ENCODE measurements at regions of chr9 and their contacts with region 1.

Region 1: GRCh38 chr9:120348951-120349429 is 231.0 kb downstream of the CDK5RAP2 start:
- DNase-seq: peak; percentile 39
- H3K4me3 ChIP-seq: no peak overlapping the region
- H3K27ac ChIP-seq: no peak overlapping the region
- H3K4me1 ChIP-seq: no peaks in the 10 kb centered on the region
- H3K27me3 ChIP-seq: no peaks in the 10 kb centered on the region
- CTCF ChIP-seq: peak; percentile 48 to 73
- POLR2A ChIP-seq: no peak

Region 2: GRCh38 chr9:118522093-118523028 is 1826.6 kb before region 1 on chr9:
- CTCF ChIA-PET with region 1: no interaction called
- POLR2A ChIA-PET with region 1: no interaction called
- dilution Hi-C with region 1: no loop called
- intact Hi-C with region 1: loop called (anchors 1 kb)
- DNase-seq: peak; percentile 79
- H3K4me3 ChIP-seq: no peak overlapping the region
- H3K27ac ChIP-seq: no peak overlapping the region
- H3K4me1 ChIP-seq: no peaks in the 10 kb centered on the region
- H3K27me3 ChIP-seq: peaks cover 0 to 2% of the 10 kb centered on the region in 2 experiments
- CTCF ChIP-seq: peak; percentile 72 to 89
- POLR2A ChIP-seq: no peak

Region 3: DNA sequence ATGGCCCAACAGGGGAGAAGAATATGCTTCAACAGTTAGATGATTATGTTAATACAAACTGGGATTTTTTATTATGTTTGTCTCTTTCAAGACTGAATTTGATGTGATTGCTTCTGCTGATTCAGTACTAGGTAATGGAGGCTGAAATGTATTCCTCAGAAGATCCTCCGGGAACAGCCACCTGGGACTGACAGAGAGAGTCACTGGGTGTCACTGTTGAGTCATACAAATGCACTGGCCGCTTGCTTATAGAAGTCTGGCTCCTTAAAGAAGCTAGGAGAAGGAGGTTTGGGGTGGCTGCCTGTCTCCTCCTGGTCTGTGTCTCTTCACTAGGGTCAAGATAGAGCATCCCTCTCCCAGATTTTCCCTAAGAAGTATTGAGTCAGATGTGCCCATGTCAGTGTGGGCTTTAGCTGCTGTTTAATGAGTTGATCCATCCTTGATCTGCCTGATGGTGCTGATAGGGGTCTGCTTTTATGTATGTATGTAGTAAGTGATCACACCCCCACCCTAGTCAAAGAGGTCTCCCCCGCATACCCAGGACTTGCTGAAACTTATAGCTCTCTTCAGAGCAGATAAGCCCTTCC is 1753.2 kb before region 1 on chr9:
- CTCF ChIA-PET with region 1: no interaction called
- POLR2A ChIA-PET with region 1: no interaction called
- dilution Hi-C with region 1: no loop called
- intact Hi-C with region 1: loop called (anchors 10 kb)
- DNase-seq: peak; percentile 48
- H3K4me3 ChIP-seq: no peak overlapping the region
- H3K27ac ChIP-seq: no peak overlapping the region
- H3K4me1 ChIP-seq: no peaks in the 10 kb centered on the region
- H3K27me3 ChIP-seq: peaks cover 0 to 2% of the 10 kb centered on the region in 2 experiments
- CTCF ChIP-seq: no peak
- POLR2A ChIP-seq: no peak

Region 4: GRCh38 chr9:119961774-119962424 is 387.1 kb before region 1 on chr9:
- CTCF ChIA-PET with region 1: no interaction called
- POLR2A ChIA-PET with region 1: no interaction called
- dilution Hi-C with region 1: no loop called
- intact Hi-C with region 1: loop called (anchors 1 kb)
- DNase-seq: peak; percentile 7
- H3K4me3 ChIP-seq: no peak overlapping the region
- H3K27ac ChIP-seq: no peak overlapping the region
- H3K4me1 ChIP-seq: no peaks in the 10 kb centered on the region
- H3K27me3 ChIP-seq: no peaks in the 10 kb centered on the region
- CTCF ChIP-seq: peak; percentile 63 to 73
- POLR2A ChIP-seq: no peak

Region 5: GRCh38 chr9:120257483-120257882 is 91.5 kb before region 1 on chr9:
- CTCF ChIA-PET with region 1: no interaction called
- POLR2A ChIA-PET with region 1: no interaction called
- dilution Hi-C with region 1: no loop called
- intact Hi-C with region 1: no loop called
- DNase-seq: no peak
- H3K4me3 ChIP-seq: no peak overlapping the region
- H3K27ac ChIP-seq: no peak overlapping the region
- H3K4me1 ChIP-seq: no peaks in the 10 kb centered on the region
- H3K27me3 ChIP-seq: no peaks in the 10 kb centered on the region
- CTCF ChIP-seq: no peak
- POLR2A ChIP-seq: no peak

Region 6: DNA sequence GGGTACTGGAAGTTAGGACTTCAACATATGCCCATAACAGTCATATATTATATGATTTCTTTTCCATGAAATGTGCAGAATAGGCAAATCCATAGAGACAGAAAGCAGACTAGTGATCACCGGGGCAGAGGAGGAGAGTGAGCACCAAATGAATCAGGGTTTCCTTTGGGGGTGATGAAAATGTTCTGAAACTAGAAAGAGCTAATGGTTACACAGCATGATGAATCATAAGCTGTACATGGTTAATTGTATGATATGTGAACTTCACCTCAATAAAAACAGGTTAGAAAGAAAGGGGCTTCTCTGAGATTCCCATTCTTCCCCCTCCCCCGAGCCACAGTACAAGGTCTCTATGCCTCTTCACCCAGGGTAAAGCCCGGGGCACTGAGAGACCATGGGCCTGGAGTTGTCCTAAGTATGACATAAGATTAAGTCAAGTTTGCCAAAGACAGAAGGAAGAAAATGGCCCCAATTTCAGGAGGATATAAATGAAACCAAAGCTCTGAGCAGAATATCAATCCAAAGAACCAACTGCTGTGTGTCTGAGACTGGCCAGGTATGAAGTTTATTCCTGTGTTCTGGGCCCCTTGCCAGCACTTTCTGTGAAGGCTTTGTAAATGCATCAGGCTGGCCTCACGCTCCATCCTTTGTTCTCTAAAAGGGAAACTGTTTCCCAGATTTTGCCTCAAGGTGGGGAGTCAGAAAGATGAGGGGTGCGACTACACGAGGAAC is 12.8 kb before region 1 on chr9:
- CTCF ChIA-PET with region 1: no interaction called
- POLR2A ChIA-PET with region 1: no interaction called
- dilution Hi-C with region 1: no loop called
- intact Hi-C with region 1: no loop called
- DNase-seq: no peak
- H3K4me3 ChIP-seq: no peak overlapping the region
- H3K27ac ChIP-seq: no peak overlapping the region
- H3K4me1 ChIP-seq: no peaks in the 10 kb centered on the region
- H3K27me3 ChIP-seq: peaks cover 0 to 2% of the 10 kb centered on the region in 2 experiments
- CTCF ChIP-seq: no peak
- POLR2A ChIP-seq: no peak

Measured in endothelial cell of umbilical vein (primary cell).